Naive thymus-derived CD4-positive, alpha-beta T cell (primary cell): ENCODE measurements at regions of chr17 and their contacts with region 1.

Region 1: GRCh38 chr17:35612924-35613521 is 25.9 kb downstream of the AP2B1 start:
- DNase-seq: peak in 6 of 9 donors; percentile 21 to 50 (median 31)
- ATAC-seq: peak; percentile 67
- H3K4me3 ChIP-seq: no peak overlapping the region
- H3K4me3 Mint-ChIP-seq: no peak overlapping the region
- H3K27ac ChIP-seq: no peak overlapping the region
- H3K27ac Mint-ChIP-seq: no peak overlapping the region
- H3K4me1 ChIP-seq: no peaks in the 10 kb centered on the region
- H3K4me1 Mint-ChIP-seq: peaks cover 0 to 9% (median 5%) of the 10 kb centered on the region in 7 donors
- H3K27me3 ChIP-seq: no peaks in the 10 kb centered on the region
- H3K27me3 Mint-ChIP-seq: no peaks in the 10 kb centered on the region

Region 2: GRCh38 chr17:35359398-35359797 is 253.6 kb before region 1 on chr17:
- CTCF ChIA-PET with region 1: no interaction called
- POLR2A ChIA-PET with region 1: no interaction called
- intact Hi-C with region 1: no loop called
- DNase-seq: no peak
- ATAC-seq: no peak
- H3K4me3 ChIP-seq: no peak overlapping the region
- H3K4me3 Mint-ChIP-seq: no peak overlapping the region
- H3K27ac ChIP-seq: no peak overlapping the region
- H3K27ac Mint-ChIP-seq: no peak overlapping the region
- H3K4me1 ChIP-seq: no peaks in the 10 kb centered on the region
- H3K4me1 Mint-ChIP-seq: peaks cover 8 to 57% (median 18%) of the 10 kb centered on the region in 7 donors
- H3K27me3 ChIP-seq: no peaks in the 10 kb centered on the region
- H3K27me3 Mint-ChIP-seq: no peaks in the 10 kb centered on the region

Region 3: GRCh38 chr17:35540589-35541404 is 72.2 kb before region 1 on chr17:
- CTCF ChIA-PET with region 1: no interaction called
- POLR2A ChIA-PET with region 1: no interaction called
- intact Hi-C with region 1: no loop called
- DNase-seq: peak; percentile 16 to 42 (median 36)
- ATAC-seq: peak; percentile 65
- H3K4me3 ChIP-seq: peak overlapping the region; percentile 64
- H3K4me3 Mint-ChIP-seq: peak overlapping the region; percentile 75 to 99 (median 87)
- H3K27ac ChIP-seq: peak overlapping the region; percentile 74
- H3K27ac Mint-ChIP-seq: peak overlapping the region; percentile 88 to 99 (median 95)
- H3K4me1 ChIP-seq: peaks cover 25 to 30% of the 10 kb centered on the region in 2 donors
- H3K4me1 Mint-ChIP-seq: peaks cover 32 to 64% (median 55%) of the 10 kb centered on the region in 7 donors
- H3K27me3 ChIP-seq: no peaks in the 10 kb centered on the region
- H3K27me3 Mint-ChIP-seq: no peaks in the 10 kb centered on the region

Region 4: GRCh38 chr17:35568541-35568940 is 44.5 kb before region 1 on chr17:
- CTCF ChIA-PET with region 1: no interaction called
- POLR2A ChIA-PET with region 1: no interaction called
- intact Hi-C with region 1: no loop called
- DNase-seq: peak in 3 of 9 donors; percentile 17 to 52 (median 34)
- ATAC-seq: peak; percentile 35
- H3K4me3 ChIP-seq: peak overlapping the region; percentile 71
- H3K4me3 Mint-ChIP-seq: peak overlapping the region; percentile 83 to 98 (median 91)
- H3K27ac ChIP-seq: peak overlapping the region; percentile 86
- H3K27ac Mint-ChIP-seq: peak overlapping the region; percentile 64 to 97 (median 93)
- H3K4me1 ChIP-seq: peaks cover 14 to 20% of the 10 kb centered on the region in 2 donors
- H3K4me1 Mint-ChIP-seq: peaks cover 18 to 49% (median 29%) of the 10 kb centered on the region in 7 donors
- H3K27me3 ChIP-seq: no peaks in the 10 kb centered on the region
- H3K27me3 Mint-ChIP-seq: peaks cover 0 to 21% (median 0%) of the 10 kb centered on the region in 5 donors

Region 5: GRCh38 chr17:35645923-35646322 is 32.9 kb after region 1 on chr17:
- CTCF ChIA-PET with region 1: interaction called, 7 read pairs
- POLR2A ChIA-PET with region 1: no interaction called
- intact Hi-C with region 1: loop called in 1 of 2 experiments (anchors 5 kb)
- DNase-seq: no peak
- ATAC-seq: no peak
- H3K4me3 ChIP-seq: no peak overlapping the region
- H3K4me3 Mint-ChIP-seq: no peak overlapping the region
- H3K27ac ChIP-seq: no peak overlapping the region
- H3K27ac Mint-ChIP-seq: no peak overlapping the region
- H3K4me1 ChIP-seq: no peaks in the 10 kb centered on the region
- H3K4me1 Mint-ChIP-seq: peaks cover 0 to 10% (median 2%) of the 10 kb centered on the region in 7 donors
- H3K27me3 ChIP-seq: no peaks in the 10 kb centered on the region
- H3K27me3 Mint-ChIP-seq: no peaks in the 10 kb centered on the region

Region 6: DNA sequence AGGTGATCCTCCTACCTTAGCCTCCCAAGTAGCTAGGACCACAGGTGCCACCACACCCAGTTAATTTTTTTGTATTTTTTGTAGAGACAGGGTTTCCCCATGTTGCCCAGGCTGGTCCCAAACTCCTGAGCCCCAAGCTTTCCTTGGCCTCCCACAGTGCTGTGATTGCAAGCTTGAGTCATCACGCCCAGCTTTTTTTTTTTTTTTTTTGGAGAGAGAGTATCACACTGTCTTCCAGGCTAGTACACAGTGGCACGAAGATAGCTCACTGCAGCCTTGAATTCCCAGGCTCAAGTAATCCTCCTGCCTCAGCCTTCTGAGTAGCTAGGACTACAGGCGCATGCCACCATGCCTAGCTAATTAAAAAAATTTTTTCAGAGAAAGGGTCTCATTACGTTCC is 228.5 kb after region 1 on chr17:
- CTCF ChIA-PET with region 1: no interaction called
- POLR2A ChIA-PET with region 1: no interaction called
- intact Hi-C with region 1: no loop called
- DNase-seq: no peak
- ATAC-seq: no peak
- H3K4me3 ChIP-seq: no peak overlapping the region
- H3K4me3 Mint-ChIP-seq: no peak overlapping the region
- H3K27ac ChIP-seq: no peak overlapping the region
- H3K27ac Mint-ChIP-seq: no peak overlapping the region
- H3K4me1 ChIP-seq: no peaks in the 10 kb centered on the region
- H3K4me1 Mint-ChIP-seq: peaks cover 0 to 6% (median 0%) of the 10 kb centered on the region in 7 donors
- H3K27me3 ChIP-seq: no peaks in the 10 kb centered on the region
- H3K27me3 Mint-ChIP-seq: no peaks in the 10 kb centered on the region